ENCODE measurements at regions of chr9 and their contacts with region 1.

Region 1: GRCh38 chr9:136790927-136791641 is at the start of gene TMEM141:
- H3K4me3 Mint-ChIP-seq: peak within 1 kb of the TSS; percentile 85
- H3K27ac Mint-ChIP-seq: peak within 1 kb of the TSS; percentile 89
- H3K4me1 Mint-ChIP-seq: peaks cover 26% of the 10 kb centered on the region
- H3K27me3 Mint-ChIP-seq: peaks cover 8% of the 10 kb centered on the region

Region 2: DNA sequence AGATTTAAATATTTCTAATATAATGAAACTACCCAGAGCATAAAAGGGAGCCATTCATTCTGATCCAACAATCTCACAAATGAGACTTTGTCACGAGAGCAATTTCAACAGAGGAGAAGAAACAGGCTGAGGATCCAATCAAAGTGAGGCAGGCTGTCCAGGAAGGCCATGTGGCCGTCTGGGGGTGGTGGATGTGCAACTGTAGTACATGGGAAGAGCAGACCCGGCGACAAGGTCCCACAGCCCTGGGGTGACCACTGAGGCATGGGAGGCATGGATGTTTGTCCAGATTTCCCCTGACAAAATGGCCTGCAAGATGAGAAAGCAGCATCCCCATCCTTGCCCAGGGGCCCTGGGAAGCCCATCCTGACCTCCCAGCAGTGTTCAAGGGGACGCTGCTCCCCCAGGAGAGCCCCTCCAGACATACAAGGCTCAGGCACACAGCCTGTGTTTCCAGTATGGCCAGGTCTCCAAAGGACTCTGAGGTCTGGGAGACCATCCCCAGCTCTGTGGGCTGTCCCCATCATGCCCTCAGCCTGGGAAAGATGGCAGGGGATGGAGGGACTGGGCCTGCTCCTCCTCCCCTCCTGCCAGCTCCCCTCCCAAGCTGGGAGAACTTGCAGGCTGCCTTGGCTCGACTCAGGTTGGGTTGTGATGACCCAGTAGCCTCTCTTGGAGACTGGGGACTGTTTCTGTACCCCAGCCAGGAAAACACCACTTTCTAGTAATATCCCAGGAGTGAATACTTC is 1938.0 kb before region 1 on chr9:
- intact Hi-C with region 1: no loop called
- H3K4me3 Mint-ChIP-seq: no peak overlapping the region
- H3K27ac Mint-ChIP-seq: no peak overlapping the region
- H3K4me1 Mint-ChIP-seq: peaks cover 3% of the 10 kb centered on the region
- H3K27me3 Mint-ChIP-seq: peaks cover 39% of the 10 kb centered on the region

Region 3: GRCh38 chr9:136807281-136808074 is 16.4 kb after region 1 on chr9 and contains the start of gene RABL6:
- intact Hi-C with region 1: loop called (anchors 1 kb)
- H3K4me3 Mint-ChIP-seq: peak within 1 kb of the TSS; percentile 86
- H3K27ac Mint-ChIP-seq: peak within 1 kb of the TSS; percentile 84
- H3K4me1 Mint-ChIP-seq: peaks cover 39% of the 10 kb centered on the region
- H3K27me3 Mint-ChIP-seq: peaks cover 10% of the 10 kb centered on the region

Region 4: GRCh38 chr9:136944519-136945279 is 153.6 kb after region 1 on chr9 and contains the starts of genes C8G and FBXW5:
- intact Hi-C with region 1: loop called (anchors 2 kb)
- H3K4me3 Mint-ChIP-seq: peak within 1 kb of the TSS; percentile 77
- H3K27ac Mint-ChIP-seq: peak within 1 kb of the TSS; percentile 69
- H3K4me1 Mint-ChIP-seq: peaks cover 43% of the 10 kb centered on the region
- H3K27me3 Mint-ChIP-seq: no peaks in the 10 kb centered on the region

Region 5: GRCh38 chr9:137034863-137035761 is 244.0 kb after region 1 on chr9:
- intact Hi-C with region 1: loop called (anchors 2 kb)
- H3K4me3 Mint-ChIP-seq: peak overlapping the region; percentile 80
- H3K27ac Mint-ChIP-seq: peak overlapping the region; percentile 90
- H3K4me1 Mint-ChIP-seq: peaks cover 75% of the 10 kb centered on the region
- H3K27me3 Mint-ChIP-seq: peaks cover 2% of the 10 kb centered on the region

Region 6: DNA sequence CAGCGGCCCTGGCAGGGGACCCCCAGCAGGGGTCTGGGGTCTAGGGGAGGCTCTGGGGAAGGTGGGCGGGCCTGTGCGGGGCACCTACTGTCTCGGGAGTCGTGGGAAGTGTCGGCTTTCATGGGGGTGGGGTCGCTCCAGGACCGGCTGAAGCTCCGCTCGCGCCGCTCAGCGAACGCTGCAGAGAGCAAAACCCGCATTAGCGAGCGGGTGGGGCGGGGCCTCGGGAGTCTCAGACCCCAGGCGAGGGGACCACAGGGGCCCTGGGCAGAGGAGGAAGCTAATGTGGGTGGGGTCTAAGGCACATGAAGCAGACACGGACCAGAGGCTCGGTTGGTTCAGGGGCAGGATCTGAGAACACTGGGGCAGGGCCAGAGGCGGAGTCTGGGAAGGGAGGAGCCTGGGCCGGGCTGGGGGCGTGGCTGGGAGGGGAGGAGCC is 662.6 kb after region 1 on chr9:
- intact Hi-C with region 1: no loop called
- H3K4me3 Mint-ChIP-seq: peak overlapping the region; percentile 77
- H3K27ac Mint-ChIP-seq: peak overlapping the region; percentile 98
- H3K4me1 Mint-ChIP-seq: peaks cover 83% of the 10 kb centered on the region
- H3K27me3 Mint-ChIP-seq: peaks cover 2% of the 10 kb centered on the region